K562 (cell line): ENCODE measurements at regions of chr2 and their contacts with region 1.

Region 1: GRCh38 chr2:18435421-18436037 is 124.9 kb downstream of the RDH14 start:
- DNase-seq: peak in 2 of 4 experiments; percentile 20 to 63
- ATAC-seq: peak; percentile 75
- H3K4me3 ChIP-seq: no peak overlapping the region
- H3K27ac ChIP-seq: no peak overlapping the region
- H3K4me1 ChIP-seq: no peaks in the 10 kb centered on the region
- H3K27me3 ChIP-seq: no peaks in the 10 kb centered on the region
- CTCF ChIP-seq: peak; percentile 10 to 76 (median 37); a peak in 3 of 6 replicates
- EP300 ChIP-seq: no peak
- POLR2A ChIP-seq: no peak
- RAD21 ChIP-seq: peak; percentile 66 to 83

Region 2: GRCh38 chr2:17270894-17271293 is 1164.6 kb before region 1 on chr2:
- CTCF ChIA-PET with region 1: no interaction called
- POLR2A ChIA-PET with region 1: no interaction called
- in situ Hi-C with region 1: no loop called
- intact Hi-C with region 1: no loop called
- DNase-seq: no peak
- ATAC-seq: no peak
- H3K4me3 ChIP-seq: no peak overlapping the region
- H3K27ac ChIP-seq: no peak overlapping the region
- H3K4me1 ChIP-seq: no peaks in the 10 kb centered on the region
- H3K27me3 ChIP-seq: no peaks in the 10 kb centered on the region
- CTCF ChIP-seq: no peak
- EP300 ChIP-seq: no peak
- POLR2A ChIP-seq: no peak
- RAD21 ChIP-seq: no peak

Region 3: GRCh38 chr2:18500333-18500732 is 64.8 kb after region 1 on chr2:
- CTCF ChIA-PET with region 1: no interaction called
- POLR2A ChIA-PET with region 1: no interaction called
- in situ Hi-C with region 1: no loop called
- intact Hi-C with region 1: no loop called
- DNase-seq: no peak
- ATAC-seq: no peak
- H3K4me3 ChIP-seq: no peak overlapping the region
- H3K27ac ChIP-seq: no peak overlapping the region
- H3K4me1 ChIP-seq: no peaks in the 10 kb centered on the region
- H3K27me3 ChIP-seq: no peaks in the 10 kb centered on the region
- CTCF ChIP-seq: no peak
- EP300 ChIP-seq: no peak
- POLR2A ChIP-seq: no peak
- RAD21 ChIP-seq: no peak

Region 4: DNA sequence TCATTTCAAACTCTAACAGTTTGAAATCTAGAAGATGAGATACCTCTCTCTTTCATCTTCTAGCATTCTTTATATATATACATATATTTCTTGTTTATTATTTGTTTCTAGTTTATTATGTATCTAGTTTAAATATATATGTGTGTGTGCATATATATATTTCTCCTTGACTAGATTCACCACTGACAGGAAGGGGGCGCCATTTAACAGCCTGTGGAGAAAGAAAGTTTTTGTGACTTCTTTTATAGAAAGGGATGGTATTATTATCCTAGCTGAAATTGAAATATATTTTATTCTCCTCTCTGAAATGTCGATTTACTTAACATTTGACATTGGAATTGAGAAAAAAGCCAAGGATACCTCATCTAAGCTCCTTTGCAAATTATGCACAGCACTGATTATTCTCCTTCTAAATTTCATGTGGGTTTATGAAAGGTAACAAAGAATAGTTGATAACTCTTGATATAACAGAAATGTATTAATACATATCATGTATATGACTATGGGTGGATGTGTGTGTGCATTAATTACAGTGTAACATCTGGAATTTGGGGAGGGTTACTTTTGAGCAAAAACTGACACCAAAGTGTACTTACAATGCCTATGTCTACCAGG is 314.5 kb after region 1 on chr2:
- CTCF ChIA-PET with region 1: no interaction called
- POLR2A ChIA-PET with region 1: no interaction called
- in situ Hi-C with region 1: no loop called
- intact Hi-C with region 1: loop called (anchors 5 kb)
- DNase-seq: peak in 3 of 4 experiments; percentile 10 to 51 (median 17)
- ATAC-seq: no peak
- H3K4me3 ChIP-seq: no peak overlapping the region
- H3K27ac ChIP-seq: no peak overlapping the region
- H3K4me1 ChIP-seq: no peaks in the 10 kb centered on the region
- H3K27me3 ChIP-seq: no peaks in the 10 kb centered on the region
- CTCF ChIP-seq: peak in 2 of 3 experiments; percentile 31 to 62; a peak in 3 of 6 replicates
- EP300 ChIP-seq: no peak
- POLR2A ChIP-seq: no peak
- RAD21 ChIP-seq: peak; percentile 74 to 76